Adrenal gland (tissue), 19 donors: ENCODE measurements at regions of chr1 and their contacts with region 1.

Region 1: GRCh38 chr1:89692601-89693521 is 59.9 kb downstream of the LRRC8C start:
- DNase-seq: peak in 1 of 7 donors; percentile 17
- H3K4me3 ChIP-seq: no peak overlapping the region
- H3K27ac ChIP-seq: peak overlapping the region in 2 of 5 donors; percentile 28 to 40
- H3K4me1 ChIP-seq: peaks cover 5 to 41% of the 10 kb centered on the region in 2 donors
- H3K27me3 ChIP-seq: no peaks in the 10 kb centered on the region
- CTCF ChIP-seq: no peak
- POLR2A ChIP-seq: no peak

Region 2: DNA sequence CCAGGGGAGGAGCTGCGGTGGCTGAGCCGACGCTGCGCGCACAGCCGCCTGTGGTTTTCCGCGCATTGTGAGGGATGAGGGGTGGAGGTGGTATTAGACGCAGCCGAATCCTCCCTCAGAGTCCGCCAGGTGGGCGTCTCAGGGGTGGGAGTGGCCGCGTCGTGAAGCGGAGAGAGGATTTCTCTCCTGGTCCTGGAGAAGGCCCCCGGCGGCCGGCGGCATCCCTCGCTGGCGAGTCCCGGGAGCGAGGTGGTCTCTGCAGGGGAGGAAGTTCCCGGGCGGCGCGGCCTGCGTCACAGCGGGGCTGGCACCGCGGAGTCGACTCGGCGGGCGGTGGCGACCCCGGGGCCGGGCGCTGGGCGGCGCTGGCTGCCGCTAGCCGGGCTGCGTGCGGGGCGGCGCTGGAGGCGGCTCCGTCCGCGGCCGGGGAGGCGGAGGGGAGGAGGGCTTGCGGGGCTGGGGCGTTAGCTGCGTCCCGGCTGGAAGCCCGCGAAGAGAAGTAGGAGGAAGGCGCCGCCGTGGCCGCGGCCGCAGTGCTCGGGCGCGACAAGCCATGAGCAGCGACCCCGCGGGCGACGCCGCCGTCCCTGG is 60.1 kb before region 1 on chr1 and contains the start of gene LRRC8C:
- intact Hi-C with region 1: loop called in 1 of 2 experiments (anchors 10 kb)
- DNase-seq: peak; percentile 81 to 90 (median 85)
- H3K4me3 ChIP-seq: peak within 1 kb of the TSS; percentile 64 to 98 (median 88)
- H3K27ac ChIP-seq: peak within 1 kb of the TSS; percentile 72 to 99 (median 90)
- H3K4me1 ChIP-seq: peaks cover 20 to 41% of the 10 kb centered on the region in 2 donors
- H3K27me3 ChIP-seq: no peaks in the 10 kb centered on the region
- CTCF ChIP-seq: peak in 4 of 6 experiments; percentile 27 to 90 (median 72)
- POLR2A ChIP-seq: peak in 1 of 2 donors; percentile 65
- total RNA-seq, gene LRRC8C: 6.5 to 33.6 (median 12.1) TPM

Region 3: DNA sequence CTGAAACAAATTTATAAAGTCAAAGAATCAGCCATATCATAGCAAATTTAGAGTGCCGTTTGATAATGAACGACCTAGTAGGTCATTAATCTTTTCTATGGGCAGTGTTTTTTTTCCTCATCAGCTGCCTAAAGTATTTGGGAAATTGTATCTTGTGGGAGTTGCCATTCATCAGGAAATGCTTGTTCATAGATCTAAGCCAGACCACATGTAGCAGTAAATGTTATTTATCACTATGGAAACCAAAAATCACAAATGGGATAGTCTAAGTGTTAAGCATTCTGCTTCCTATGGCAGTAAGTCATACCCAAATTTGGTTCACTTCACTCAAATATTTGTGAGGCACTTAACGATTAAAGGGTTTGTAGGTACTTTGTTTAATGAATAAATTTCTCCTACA is 180.9 kb after region 1 on chr1:
- intact Hi-C with region 1: no loop called
- DNase-seq: no peak
- H3K4me3 ChIP-seq: no peak overlapping the region
- H3K27ac ChIP-seq: no peak overlapping the region
- H3K4me1 ChIP-seq: no peaks in the 10 kb centered on the region
- H3K27me3 ChIP-seq: no peaks in the 10 kb centered on the region
- CTCF ChIP-seq: no peak
- POLR2A ChIP-seq: no peak